ENCODE measurements at regions of chr18 and their contacts with region 1.

Region 1: DNA sequence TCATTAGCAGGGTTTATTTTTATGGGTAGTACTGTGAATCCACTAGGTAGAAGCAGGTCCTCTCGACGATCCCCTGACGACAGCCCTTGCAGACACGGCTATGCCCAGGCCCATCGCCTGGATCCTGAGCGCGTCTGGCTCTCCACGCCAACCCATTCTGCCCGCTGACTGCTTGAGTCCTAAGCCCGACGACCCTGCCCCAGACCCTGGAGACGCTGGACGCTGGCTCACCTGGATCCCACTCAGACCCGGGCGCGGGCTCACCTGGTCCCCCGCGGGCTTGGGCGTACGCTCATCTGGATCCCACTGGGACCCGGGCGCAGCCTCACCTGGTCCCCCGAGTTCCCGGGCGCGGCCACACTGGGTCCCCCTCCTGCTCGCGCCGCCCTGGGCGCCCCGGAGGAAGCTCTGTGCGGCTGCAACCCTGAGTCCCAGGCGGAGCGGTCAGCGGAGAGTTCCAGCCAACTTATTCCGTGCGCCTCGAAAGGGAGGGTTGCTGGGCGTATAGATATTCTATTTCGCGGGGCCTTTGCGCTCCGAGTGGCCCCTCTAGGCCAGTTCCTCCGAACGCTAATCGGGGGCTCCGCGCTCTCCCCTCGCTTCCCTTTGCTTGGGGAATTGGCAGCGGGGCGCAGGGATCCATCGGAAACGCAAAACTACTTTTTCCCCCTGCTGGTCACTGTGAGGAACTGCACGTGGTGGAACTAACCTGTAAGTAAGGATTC is 22.4 kb upstream of the RMP24 start:
- DNase-seq: peak; percentile 35 to 63 (median 55)
- H3K4me3 ChIP-seq: peak overlapping the region; percentile 51
- H3K27ac ChIP-seq: no peak overlapping the region
- H3K4me1 ChIP-seq: peaks cover 3% of the 10 kb centered on the region
- H3K27me3 ChIP-seq: no peaks in the 10 kb centered on the region
- CTCF ChIP-seq: peak; percentile 55 to 67 (median 62)
- EP300 ChIP-seq: no peak
- POLR2A ChIP-seq: no peak

Region 2: GRCh38 chr18:35407871-35408481 is 542.1 kb before region 1 on chr18:
- intact Hi-C with region 1: loop called in 2 of 4 experiments (anchors 10 kb)
- DNase-seq: peak in 2 of 5 donors; percentile 27 to 28
- H3K4me3 ChIP-seq: no peak overlapping the region
- H3K27ac ChIP-seq: no peak overlapping the region
- H3K4me1 ChIP-seq: no peaks in the 10 kb centered on the region
- H3K27me3 ChIP-seq: peaks cover 2% of the 10 kb centered on the region
- CTCF ChIP-seq: peak; percentile 28 to 53 (median 47)
- EP300 ChIP-seq: no peak
- POLR2A ChIP-seq: no peak

Region 3: DNA sequence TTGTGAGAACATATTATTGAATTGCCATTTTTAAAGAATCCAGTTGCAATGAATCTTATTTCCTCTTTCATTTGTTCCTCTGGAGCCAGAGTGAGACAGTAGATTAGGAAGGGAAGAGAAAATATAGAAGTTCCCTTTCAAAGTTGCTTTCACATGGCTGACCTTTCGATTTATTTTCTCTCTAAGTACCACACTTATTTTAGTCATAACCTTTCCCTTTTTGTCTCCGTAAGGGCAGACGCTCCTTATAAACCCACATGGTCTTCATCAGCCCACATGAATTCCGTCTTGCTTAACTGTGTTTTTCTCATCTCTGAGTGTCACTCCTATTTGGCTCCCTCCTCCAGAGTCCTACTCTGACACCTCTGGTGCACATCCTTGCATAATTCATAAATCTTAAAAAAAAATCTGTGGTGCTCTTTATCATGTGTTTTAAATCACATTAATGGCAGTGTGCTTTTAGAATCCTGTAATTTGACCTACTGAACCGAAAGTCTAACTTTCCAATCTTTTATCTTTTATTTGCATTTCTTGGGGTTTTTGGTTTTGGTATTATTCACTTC is 534.5 kb before region 1 on chr18:
- intact Hi-C with region 1: loop called in 1 of 4 experiments (anchors 10 kb)
- DNase-seq: no peak
- H3K4me3 ChIP-seq: no peak overlapping the region
- H3K27ac ChIP-seq: no peak overlapping the region
- H3K4me1 ChIP-seq: no peaks in the 10 kb centered on the region
- H3K27me3 ChIP-seq: no peaks in the 10 kb centered on the region
- CTCF ChIP-seq: no peak
- EP300 ChIP-seq: no peak
- POLR2A ChIP-seq: no peak

Region 4: DNA sequence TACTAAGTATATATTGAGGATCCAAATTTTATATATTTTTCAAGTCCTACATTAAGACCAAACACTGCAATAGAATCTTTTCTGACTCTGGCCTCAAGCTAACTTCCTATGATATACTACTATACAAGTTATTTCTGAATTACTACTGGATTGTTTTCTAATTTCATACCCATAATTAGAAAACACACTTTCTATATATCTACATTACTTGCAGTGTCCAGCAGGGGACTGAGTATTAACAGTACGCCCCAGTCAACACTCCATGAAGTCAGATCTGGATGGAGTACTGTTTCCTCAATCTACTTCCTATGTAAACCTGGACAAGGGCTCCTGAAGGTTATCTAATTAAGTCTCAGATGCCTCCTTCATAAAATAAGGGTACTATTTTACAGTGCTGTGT is 48.9 kb after region 1 on chr18:
- intact Hi-C with region 1: no loop called
- DNase-seq: no peak
- H3K4me3 ChIP-seq: no peak overlapping the region
- H3K27ac ChIP-seq: no peak overlapping the region
- H3K4me1 ChIP-seq: no peaks in the 10 kb centered on the region
- H3K27me3 ChIP-seq: no peaks in the 10 kb centered on the region
- CTCF ChIP-seq: no peak
- EP300 ChIP-seq: no peak
- POLR2A ChIP-seq: no peak

Region 5: DNA sequence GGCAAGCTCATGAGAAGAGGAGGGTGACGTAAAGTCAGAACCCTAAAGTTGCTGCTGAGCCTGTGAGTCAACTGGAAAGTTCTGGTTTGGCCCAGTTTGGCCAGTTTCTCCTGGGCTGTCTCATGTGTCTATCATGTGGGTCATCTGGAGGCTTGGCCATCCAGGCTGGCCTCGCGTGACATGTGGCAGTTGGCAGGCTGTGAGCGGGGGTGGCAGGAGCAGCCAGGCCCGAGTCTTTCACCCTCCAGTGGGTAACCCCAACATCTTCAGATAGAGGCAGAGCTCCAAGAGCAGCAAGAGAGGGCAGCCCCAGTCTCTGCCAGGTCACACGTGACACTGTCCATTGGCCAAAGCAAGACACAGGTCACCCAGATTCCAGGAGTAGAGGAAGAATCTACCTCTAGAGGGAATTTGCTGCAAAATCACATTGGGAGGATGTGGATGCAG is 398.9 kb after region 1 on chr18:
- intact Hi-C with region 1: no loop called
- DNase-seq: no peak
- H3K4me3 ChIP-seq: no peak overlapping the region
- H3K27ac ChIP-seq: no peak overlapping the region
- H3K4me1 ChIP-seq: no peaks in the 10 kb centered on the region
- H3K27me3 ChIP-seq: no peaks in the 10 kb centered on the region
- CTCF ChIP-seq: no peak
- EP300 ChIP-seq: no peak
- POLR2A ChIP-seq: no peak

Measured in ovary (tissue), 10 donors.